ENCODE measurements at regions of chr12 and their contacts with region 1.

Region 1: DNA sequence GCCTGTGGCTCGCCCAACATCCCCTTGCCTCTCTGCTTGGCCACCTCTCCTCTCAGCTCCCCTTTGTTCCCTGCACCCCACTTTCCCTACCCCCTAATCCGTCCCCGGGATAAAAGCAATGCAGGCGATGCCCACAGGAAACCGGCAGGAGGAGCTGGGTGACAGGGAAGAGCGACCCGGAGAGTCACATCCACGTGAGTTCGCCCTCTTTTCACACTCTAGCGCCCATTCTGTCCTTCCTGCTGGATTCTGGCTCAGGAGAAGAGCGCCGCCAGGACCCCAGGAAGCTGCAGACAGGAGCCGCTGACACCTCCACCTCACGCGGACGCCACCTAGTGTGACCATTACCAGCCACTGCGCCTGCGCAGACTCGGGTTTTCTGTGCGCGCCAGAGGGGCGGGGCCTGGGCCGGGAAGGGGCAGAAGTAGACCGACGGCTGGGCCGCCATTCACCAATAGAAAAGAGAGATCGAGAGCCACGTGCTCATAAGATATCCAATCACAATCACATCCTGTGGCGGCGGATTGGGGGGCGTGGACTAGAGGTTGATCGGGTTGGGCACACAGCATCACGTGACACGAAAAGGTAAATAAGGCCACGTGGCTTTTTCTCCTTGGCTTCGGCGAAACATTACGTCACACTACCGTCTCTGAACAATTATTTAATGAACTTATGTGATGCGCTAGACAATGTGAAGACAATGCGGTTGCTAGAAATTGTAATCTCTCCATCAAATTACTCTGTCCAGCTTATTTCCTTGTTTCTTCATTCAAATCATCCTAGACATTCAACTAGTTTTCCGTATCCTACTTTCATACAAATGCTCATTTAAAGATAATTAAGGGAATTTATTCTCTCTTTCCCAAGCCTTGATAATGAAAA is 10.1 kb downstream of the PLA2G1B start:
- DNase-seq: peak; percentile 97
- ATAC-seq: peak; percentile 100
- H3K4me3 ChIP-seq: peak overlapping the region; percentile 73
- H3K27ac ChIP-seq: peak overlapping the region; percentile 80
- H3K4me1 ChIP-seq: no peaks in the 10 kb centered on the region
- H3K27me3 ChIP-seq: no peaks in the 10 kb centered on the region
- CTCF ChIP-seq: peak; percentile 52 to 53 (median 53)
- EP300 ChIP-seq: no peak; a peak in 1 of 4 replicates
- POLR2A ChIP-seq: peak; percentile 95
- RAD21 ChIP-seq: no peak

Region 2: GRCh38 chr12:120301962-120302815 is 15.3 kb before region 1 on chr12 and contains the start of gene SIRT4:
- CTCF ChIA-PET with region 1: interaction called, 80 read pairs
- POLR2A ChIA-PET with region 1: interaction called, 3 read pairs
- RAD21 ChIA-PET with region 1: interaction called, 11 read pairs
- SMC1A ChIA-PET with region 1: interaction called, 10 read pairs
- in situ Hi-C with region 1: no loop called
- intact Hi-C with region 1: no loop called
- DNase-seq: peak; percentile 88
- ATAC-seq: peak; percentile 100
- H3K4me3 ChIP-seq: peak within 1 kb of the TSS; percentile 85
- H3K27ac ChIP-seq: peak within 1 kb of the TSS; percentile 20; the same call in 1 of the 2 replicates
- H3K4me1 ChIP-seq: no peaks in the 10 kb centered on the region
- H3K27me3 ChIP-seq: no peaks in the 10 kb centered on the region
- CTCF ChIP-seq: peak; percentile 61 to 90 (median 84)
- EP300 ChIP-seq: no peak
- POLR2A ChIP-seq: no peak
- RAD21 ChIP-seq: peak; percentile 33; the same call in 1 of the 2 replicates
- polyA plus RNA-seq, gene SIRT4: 0.79 to 0.98 TPM

Region 3: DNA sequence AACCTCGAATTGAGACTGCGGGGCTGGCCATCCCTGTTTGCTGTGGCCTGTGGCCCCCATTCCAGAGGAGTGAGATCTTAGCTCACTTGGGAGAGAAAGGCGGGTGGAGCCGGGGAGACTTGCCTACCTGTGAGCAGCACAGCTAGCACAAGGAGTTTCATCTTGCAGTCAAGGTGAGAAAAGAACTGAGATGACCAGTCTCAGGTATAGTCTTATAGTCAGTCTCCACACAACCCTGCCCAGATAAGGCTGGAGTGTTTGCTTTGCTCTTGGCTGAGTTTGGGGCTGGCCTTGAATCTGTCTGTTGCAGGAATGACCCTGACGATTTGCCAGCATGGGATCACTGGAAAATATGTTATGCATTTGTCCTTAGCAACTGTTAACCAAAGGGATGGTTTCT is 10.1 kb after region 1 on chr12 and contains the start of gene PLA2G1B:
- CTCF ChIA-PET with region 1: interaction called, 11 read pairs
- POLR2A ChIA-PET with region 1: no interaction called
- RAD21 ChIA-PET with region 1: no interaction called
- SMC1A ChIA-PET with region 1: no interaction called
- in situ Hi-C with region 1: no loop called
- intact Hi-C with region 1: no loop called
- DNase-seq: no peak
- ATAC-seq: no peak
- H3K4me3 ChIP-seq: no peak within 1 kb of the TSS
- H3K27ac ChIP-seq: no peak within 1 kb of the TSS
- H3K4me1 ChIP-seq: no peaks in the 10 kb centered on the region
- H3K27me3 ChIP-seq: no peaks in the 10 kb centered on the region
- CTCF ChIP-seq: no peak
- EP300 ChIP-seq: no peak
- POLR2A ChIP-seq: no peak
- RAD21 ChIP-seq: no peak
- polyA plus RNA-seq, gene PLA2G1B: not detected

Measured in GM12878 (cell line).